RWPE1 (cell line): ENCODE measurements at regions of chr14 and their contacts with region 1.

Region 1: GRCh38 chr14:99982537-99983250 is 82.5 kb upstream of the EVL start:
- DNase-seq: peak; percentile 72
- H3K27ac ChIP-seq: no peak overlapping the region
- CTCF ChIP-seq: peak; percentile 89

Region 2: GRCh38 chr14:99964979-99965378 is 17.7 kb before region 1 on chr14:
- CTCF ChIA-PET with region 1: no interaction called
- POLR2A ChIA-PET with region 1: no interaction called
- DNase-seq: no peak
- H3K27ac ChIP-seq: no peak overlapping the region
- CTCF ChIP-seq: no peak

Region 3: DNA sequence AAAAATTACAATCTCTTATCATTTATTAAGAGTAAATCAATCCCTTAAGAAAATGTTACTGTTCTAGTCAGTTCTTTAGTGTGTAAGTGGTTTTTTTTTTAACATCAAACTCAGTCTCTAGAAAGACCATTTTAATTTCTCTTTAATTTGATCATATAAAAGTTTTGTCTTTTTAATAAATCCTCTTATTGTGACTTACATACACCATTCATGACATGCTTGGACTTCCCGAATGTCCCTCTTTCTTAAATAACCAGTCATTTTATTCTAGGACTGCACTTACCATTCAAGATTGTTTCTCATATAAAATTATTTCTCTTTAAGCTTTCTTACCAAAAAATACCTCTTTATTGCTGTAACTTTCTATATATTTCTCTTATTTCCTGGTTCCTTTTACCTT is 21.7 kb after region 1 on chr14:
- CTCF ChIA-PET with region 1: no interaction called
- POLR2A ChIA-PET with region 1: no interaction called
- DNase-seq: no peak
- H3K27ac ChIP-seq: no peak overlapping the region
- CTCF ChIP-seq: no peak

Region 4: GRCh38 chr14:100192672-100193416 is 210.2 kb after region 1 on chr14:
- CTCF ChIA-PET with region 1: interaction called, 25 read pairs
- POLR2A ChIA-PET with region 1: no interaction called
- DNase-seq: peak; percentile 99
- H3K27ac ChIP-seq: peak overlapping the region; percentile 86
- CTCF ChIP-seq: peak; percentile 94